Kidney (tissue), 22 donors: ENCODE measurements at regions of chr10 and their contacts with region 1.

Region 1: GRCh38 chr10:52488606-52489485 is 174.8 kb downstream of the DKK1 start:
- DNase-seq: peak in 2 of 5 donors; percentile 37 to 67
- H3K4me3 ChIP-seq: no peak overlapping the region
- H3K27ac ChIP-seq: no peak overlapping the region
- H3K4me1 ChIP-seq: no peaks in the 10 kb centered on the region
- H3K27me3 ChIP-seq: no peaks in the 10 kb centered on the region
- CTCF ChIP-seq: peak; percentile 28

Region 2: GRCh38 chr10:52308251-52309031 is 180.4 kb before region 1 on chr10:
- intact Hi-C with region 1: loop called (anchors 10 kb)
- DNase-seq: peak in 4 of 5 donors; percentile 76 to 90 (median 82)
- H3K4me3 ChIP-seq: peak overlapping the region; percentile 58 to 65 (median 61)
- H3K27ac ChIP-seq: no peak overlapping the region
- H3K4me1 ChIP-seq: peaks cover 0 to 8% (median 3%) of the 10 kb centered on the region in 3 donors
- H3K27me3 ChIP-seq: peaks cover 3% of the 10 kb centered on the region
- CTCF ChIP-seq: peak; percentile 54

Region 3: DNA sequence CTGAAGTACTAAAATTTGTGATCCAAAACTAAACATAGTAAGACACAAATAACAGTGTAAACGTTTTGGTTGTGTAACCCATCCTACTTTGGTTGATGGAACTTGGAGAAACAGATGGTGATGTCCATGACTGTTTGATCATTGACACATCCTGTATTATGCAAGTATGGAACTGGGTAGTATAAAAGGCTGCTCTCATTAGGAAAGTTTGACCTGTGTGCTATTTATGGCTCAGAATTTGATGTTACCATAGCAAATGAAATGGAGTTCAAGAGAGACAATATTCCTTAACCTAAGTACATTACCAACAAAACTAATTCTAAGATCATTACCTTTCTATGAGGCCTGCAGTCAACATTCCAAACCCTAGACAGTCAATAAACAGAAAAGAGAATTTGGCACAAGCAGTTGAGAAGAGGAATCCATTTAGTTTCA is 134.9 kb before region 1 on chr10:
- intact Hi-C with region 1: no loop called
- DNase-seq: no peak
- H3K4me3 ChIP-seq: no peak overlapping the region
- H3K27ac ChIP-seq: no peak overlapping the region
- H3K4me1 ChIP-seq: no peaks in the 10 kb centered on the region
- H3K27me3 ChIP-seq: no peaks in the 10 kb centered on the region
- CTCF ChIP-seq: no peak